ENCODE measurements at regions of chr22 and their contacts with region 1.

Region 1: GRCh38 chr22:40533712-40534378 is 102.7 kb downstream of the MRTFA start:
- DNase-seq: peak; percentile 41

Region 2: DNA sequence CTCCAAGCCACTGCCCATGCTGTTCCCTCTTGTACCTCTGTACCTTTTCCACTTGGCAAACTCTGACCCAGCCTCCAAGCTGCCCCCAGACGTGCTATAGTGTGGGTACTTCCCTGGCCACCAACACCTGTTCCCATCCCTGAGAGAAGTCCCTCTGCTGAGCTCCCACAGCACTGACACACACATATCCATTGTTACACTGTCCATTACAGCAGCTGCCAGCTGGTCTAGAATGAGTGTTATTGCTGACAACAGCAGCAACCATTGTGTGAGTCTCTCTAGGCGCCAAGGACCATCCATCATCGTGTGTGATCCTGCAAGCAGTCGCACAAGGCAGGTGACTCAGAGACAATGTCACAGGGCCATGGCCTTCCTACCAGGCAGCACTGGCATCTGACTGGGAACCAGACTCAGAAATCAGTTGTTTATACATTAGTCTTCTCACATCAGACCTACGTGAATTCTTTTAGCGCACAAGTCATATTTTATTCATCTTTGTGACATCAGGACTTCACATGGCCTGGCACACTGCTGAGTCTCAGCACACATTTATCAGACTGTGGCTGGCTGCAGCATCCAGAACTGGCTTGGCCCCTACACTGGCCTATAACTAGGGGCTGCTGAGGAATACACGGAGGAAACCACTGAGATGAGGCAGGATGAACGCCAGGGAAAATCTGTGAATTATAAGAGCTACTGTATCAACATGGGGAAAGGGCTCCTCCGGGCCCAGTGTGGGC is 107.1 kb before region 1 on chr22:
- in situ Hi-C with region 1: no loop called
- DNase-seq: no peak

Region 3: GRCh38 chr22:40452730-40453493 is 80.9 kb before region 1 on chr22:
- in situ Hi-C with region 1: no loop called
- DNase-seq: peak; percentile 36

Region 4: DNA sequence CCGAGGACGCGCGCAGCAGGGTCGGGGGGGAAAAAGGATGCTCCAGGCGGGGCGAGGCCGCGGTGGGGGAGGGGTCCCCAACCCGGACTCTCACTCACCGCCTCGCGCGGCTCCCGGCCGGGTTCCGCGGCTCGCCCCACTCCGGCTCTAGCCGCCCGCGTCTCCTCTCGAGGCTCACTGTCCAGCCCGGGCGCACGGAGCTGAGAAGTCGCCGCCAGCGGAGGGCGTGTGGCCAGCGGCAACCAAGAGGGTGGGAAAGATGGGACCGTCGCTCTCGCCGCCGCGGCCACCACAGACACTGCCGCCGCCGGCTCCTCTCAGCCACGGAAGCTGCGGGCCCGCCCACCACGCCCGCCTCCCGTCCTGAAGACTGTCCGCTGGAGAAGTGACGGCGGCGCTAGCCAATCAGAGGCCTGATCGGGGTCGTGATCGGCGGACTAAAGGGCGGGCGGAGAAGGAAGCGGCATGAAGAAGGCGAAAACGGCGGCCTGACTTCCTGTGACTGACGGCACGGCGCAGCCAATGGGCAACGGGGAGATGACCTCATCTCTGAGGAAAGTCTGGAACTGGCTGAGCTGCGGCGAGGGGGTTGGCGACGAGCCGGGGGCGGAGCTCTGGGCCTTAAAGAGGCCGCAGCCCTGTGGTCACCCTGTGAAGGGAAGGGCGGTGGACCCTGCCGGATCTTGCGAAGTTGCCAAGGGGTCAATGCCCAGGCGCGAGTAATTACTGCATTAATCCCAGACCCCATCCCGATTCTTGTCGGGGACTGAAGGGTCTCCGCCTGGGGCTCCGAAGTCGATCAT is 102.7 kb after region 1 on chr22 and contains the start of gene MRTFA:
- in situ Hi-C with region 1: loop called (anchors 25 kb)
- DNase-seq: peak; percentile 100
- total RNA-seq, gene MRTFA: 11.0 and 14.6 TPM in 2 replicates